HepG2 (cell line): ENCODE measurements at regions of chr2 and their contacts with region 1.

Region 1: DNA sequence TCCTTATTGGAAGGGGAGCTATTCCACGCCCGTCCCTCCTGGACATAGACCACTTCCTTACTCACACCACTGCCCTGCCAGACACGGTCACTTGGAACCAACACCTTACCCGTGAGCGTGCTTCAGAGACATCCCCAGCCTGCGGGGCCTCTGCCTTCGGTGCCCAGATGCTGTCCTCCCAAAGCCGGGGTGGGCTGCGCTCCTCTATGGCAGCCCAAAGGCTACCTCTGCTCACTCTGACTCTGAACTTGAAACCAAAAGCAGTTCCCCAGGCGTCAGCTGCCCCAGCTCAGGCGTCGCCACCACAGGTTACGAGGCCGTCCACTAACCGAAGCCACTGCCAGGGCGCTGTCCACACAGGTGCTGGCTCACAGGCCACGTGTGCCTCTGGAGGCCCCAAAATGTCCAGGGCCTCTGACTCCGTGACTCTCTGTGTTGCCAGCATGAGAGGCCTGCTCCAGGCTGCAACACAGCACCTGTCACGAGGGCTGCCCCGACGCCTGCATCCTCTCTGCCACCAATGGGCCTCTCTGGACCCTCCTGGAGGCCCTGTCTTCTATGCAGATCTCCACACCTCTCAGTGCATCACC is 23.8 kb downstream of the HDAC4 start:
- DNase-seq: no peak
- ATAC-seq: no peak
- H3K4me3 ChIP-seq: no peak overlapping the region
- H3K27ac ChIP-seq: no peak overlapping the region
- H3K4me1 ChIP-seq: no peaks in the 10 kb centered on the region
- H3K27me3 ChIP-seq: no peaks in the 10 kb centered on the region
- CTCF ChIP-seq: no peak
- EP300 ChIP-seq: no peak
- POLR2A ChIP-seq: no peak
- RAD21 ChIP-seq: no peak

Region 2: GRCh38 chr2:239308661-239309397 is 68.2 kb before region 1 on chr2:
- CTCF ChIA-PET with region 1: no interaction called
- POLR2A ChIA-PET with region 1: no interaction called
- in situ Hi-C with region 1: no loop called
- intact Hi-C with region 1: no loop called
- DNase-seq: no peak
- ATAC-seq: no peak
- H3K4me3 ChIP-seq: no peak overlapping the region
- H3K27ac ChIP-seq: no peak overlapping the region
- H3K4me1 ChIP-seq: no peaks in the 10 kb centered on the region
- H3K27me3 ChIP-seq: no peaks in the 10 kb centered on the region
- CTCF ChIP-seq: no peak
- EP300 ChIP-seq: no peak
- POLR2A ChIP-seq: no peak
- RAD21 ChIP-seq: no peak

Region 3: GRCh38 chr2:239411549-239412319 is 34.7 kb after region 1 on chr2:
- CTCF ChIA-PET with region 1: no interaction called
- POLR2A ChIA-PET with region 1: interaction called, 3 read pairs
- in situ Hi-C with region 1: no loop called
- intact Hi-C with region 1: loop called (anchors 1 kb)
- DNase-seq: no peak
- ATAC-seq: no peak
- H3K4me3 ChIP-seq: no peak overlapping the region
- H3K27ac ChIP-seq: no peak overlapping the region
- H3K4me1 ChIP-seq: no peaks in the 10 kb centered on the region; the same call in 1 of the 2 replicates
- H3K27me3 ChIP-seq: peaks cover 7 to 64% of the 10 kb centered on the region in 2 experiments; a peak in 4 of 5 replicates
- CTCF ChIP-seq: no peak
- EP300 ChIP-seq: no peak
- POLR2A ChIP-seq: no peak
- RAD21 ChIP-seq: no peak